Pancreas (tissue), 10 donors: ENCODE measurements at regions of chr6 and their contacts with region 1.

Region 1: DNA sequence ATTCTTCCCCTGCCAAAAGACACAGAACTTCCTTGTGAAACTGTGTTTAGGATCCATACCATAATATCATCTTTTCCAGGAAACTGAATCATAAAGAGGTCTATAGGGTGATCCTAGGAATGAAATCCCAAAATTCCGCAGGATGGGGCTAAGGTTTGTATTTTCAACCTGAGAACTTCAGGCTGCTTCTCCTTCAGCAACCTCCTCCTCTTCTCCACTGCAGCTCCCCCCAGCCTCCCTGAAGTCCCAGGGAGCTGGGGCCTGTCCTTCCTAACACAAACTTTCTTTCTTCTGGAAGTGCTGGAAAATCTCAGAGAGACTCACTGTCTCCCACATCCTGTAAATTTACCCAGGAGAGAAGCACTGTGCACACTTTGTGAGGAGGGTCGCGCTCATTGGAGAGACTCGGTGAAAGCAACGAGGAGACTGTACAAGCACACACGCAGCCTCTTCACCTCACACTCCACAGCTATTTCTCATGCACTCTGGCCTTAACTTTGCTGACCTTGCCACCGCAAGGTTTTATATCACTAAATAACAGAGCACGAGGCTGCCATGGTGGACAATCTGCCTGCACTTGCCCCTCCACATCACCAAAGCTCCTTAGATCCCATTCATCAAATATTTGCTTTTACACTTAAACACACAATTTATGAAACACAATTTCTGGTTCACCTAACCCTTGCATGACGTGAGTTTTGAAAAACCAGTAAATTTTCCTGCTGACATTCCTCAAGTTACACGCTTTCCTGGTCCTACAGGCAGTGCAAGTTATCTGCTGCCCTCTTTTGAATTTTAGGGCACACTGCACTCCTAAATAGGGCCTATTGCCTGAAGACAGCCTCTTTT is 14.3 kb downstream of the ID4 start:
- DNase-seq: peak in 3 of 6 donors; percentile 31 to 64 (median 37)
- ATAC-seq: peak; percentile 96 to 99 (median 98)
- H3K4me3 ChIP-seq: no peak overlapping the region
- H3K27ac ChIP-seq: peak overlapping the region in 3 of 4 donors; percentile 20 to 46 (median 39)
- H3K4me1 ChIP-seq: no peaks in the 10 kb centered on the region
- H3K27me3 ChIP-seq: no peaks in the 10 kb centered on the region
- CTCF ChIP-seq: peak; percentile 44 to 81 (median 70)

Region 2: DNA sequence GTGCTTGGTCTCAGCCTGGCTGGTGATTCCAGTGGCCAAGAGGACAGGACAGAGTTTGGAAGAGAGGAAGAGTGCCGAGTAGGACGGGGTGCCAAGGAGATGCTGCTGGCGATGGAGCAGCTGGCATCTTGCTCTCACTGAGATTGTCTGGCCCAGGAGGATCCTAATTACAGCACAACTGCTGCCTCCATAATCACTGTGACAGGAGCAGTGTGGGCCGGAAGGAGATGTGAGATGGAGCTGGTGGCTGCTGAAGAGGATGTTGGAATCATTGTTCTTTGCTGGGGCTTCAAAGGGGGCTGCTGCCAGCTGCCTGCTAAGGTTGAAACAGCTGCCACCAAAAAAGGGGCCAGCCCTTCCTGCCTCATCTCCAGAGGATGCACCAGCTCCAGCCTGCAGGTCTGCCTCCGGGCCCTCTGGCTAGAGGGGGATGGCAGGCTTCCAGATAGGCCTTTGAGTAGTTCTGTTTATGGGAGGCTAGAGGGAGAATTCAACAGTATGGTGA is 1249.9 kb before region 1 on chr6:
- intact Hi-C with region 1: loop called in 1 of 3 experiments (anchors 10 kb)
- DNase-seq: no peak
- ATAC-seq: no peak
- H3K4me3 ChIP-seq: no peak overlapping the region
- H3K27ac ChIP-seq: no peak overlapping the region
- H3K4me1 ChIP-seq: no peaks in the 10 kb centered on the region
- H3K27me3 ChIP-seq: no peaks in the 10 kb centered on the region
- CTCF ChIP-seq: no peak

Region 3: DNA sequence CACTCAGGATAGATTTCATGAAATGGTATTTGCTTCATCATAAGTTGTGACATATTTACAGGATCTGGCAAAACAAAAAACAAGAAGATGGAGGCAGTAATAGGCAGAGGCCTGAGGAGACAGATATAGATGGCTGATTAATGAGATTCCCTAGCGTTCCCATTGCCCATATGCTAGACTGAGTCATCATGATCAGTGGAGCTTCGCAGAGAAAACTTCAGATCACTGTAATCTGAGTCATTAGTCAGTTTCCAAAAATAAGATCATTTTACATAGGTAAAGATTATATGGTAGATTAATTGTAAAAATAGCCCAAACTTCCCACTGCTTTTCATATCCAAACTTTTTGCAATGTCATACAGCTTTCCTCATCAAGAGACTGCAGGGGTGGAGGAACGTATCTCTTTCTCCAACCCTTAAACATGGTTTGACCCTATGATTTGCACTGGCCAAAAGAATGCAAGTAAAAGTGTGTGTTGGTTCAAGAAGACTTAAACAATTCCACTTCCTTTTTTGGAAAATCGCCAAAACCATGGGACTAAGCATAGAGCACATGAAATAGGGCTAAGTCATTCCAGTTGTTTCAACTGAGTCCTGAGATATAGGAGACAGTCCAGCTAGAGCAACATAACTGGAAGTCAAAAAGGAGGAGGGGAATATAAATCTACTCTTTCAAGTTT is 838.3 kb before region 1 on chr6:
- intact Hi-C with region 1: loop called in 1 of 3 experiments (anchors 10 kb)
- DNase-seq: no peak
- ATAC-seq: no peak
- H3K4me3 ChIP-seq: no peak overlapping the region
- H3K27ac ChIP-seq: no peak overlapping the region
- H3K4me1 ChIP-seq: no peaks in the 10 kb centered on the region
- H3K27me3 ChIP-seq: no peaks in the 10 kb centered on the region
- CTCF ChIP-seq: no peak